PC-3 (cell line): ENCODE measurements at regions of chr3 and their contacts with region 1.

Region 1: DNA sequence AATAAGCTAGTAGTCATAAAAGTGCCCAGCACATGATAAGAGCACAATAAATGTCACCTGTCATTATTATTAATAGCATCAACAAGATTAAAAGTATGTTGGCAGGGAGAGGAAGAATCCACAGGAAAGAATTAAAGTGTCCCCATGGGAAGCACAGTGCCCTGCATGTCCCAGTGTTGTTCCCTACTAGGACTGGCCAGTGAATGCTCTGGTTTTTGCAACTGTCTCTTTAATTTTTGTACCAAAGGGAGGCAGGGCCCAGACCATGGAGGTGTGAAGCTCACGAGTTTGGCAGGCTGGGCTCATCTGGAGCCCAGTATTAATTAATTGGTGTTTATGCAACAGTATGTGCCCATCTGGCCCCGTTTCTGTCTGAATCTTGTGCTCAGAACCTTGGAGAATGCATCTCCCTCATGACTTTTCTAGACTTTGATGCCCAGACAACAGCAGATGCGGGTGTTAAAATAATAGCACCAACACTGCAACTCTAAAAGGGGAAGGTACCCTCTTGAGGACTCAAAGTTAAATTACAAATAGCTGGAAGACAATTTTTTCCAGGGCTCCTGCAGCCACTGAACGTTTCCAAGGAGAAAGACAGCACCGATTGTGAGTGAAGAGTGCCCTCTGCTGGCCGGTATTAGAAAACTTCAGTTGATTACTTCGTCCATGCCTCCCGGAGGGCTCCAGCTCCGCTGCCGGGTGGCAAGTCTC is 71.9 kb upstream of the SPATA12 start:
- DNase-seq: peak; percentile 87
- ATAC-seq: peak; percentile 53
- H3K4me3 ChIP-seq: no peak overlapping the region
- H3K27ac ChIP-seq: no peak overlapping the region
- H3K4me1 ChIP-seq: peaks cover 19% of the 10 kb centered on the region
- H3K27me3 ChIP-seq: no peaks in the 10 kb centered on the region
- CTCF ChIP-seq: peak; percentile 94

Region 2: GRCh38 chr3:56556908-56557830 is 431.4 kb before region 1 on chr3 and contains the start of gene CCDC66:
- CTCF ChIA-PET with region 1: no interaction called
- POLR2A ChIA-PET with region 1: interaction called, 18 read pairs
- intact Hi-C with region 1: no loop called
- DNase-seq: peak; percentile 89
- ATAC-seq: peak; percentile 99
- H3K4me3 ChIP-seq: peak within 1 kb of the TSS; percentile 75
- H3K27ac ChIP-seq: peak within 1 kb of the TSS; percentile 27
- H3K4me1 ChIP-seq: peaks cover 14% of the 10 kb centered on the region
- H3K27me3 ChIP-seq: peaks cover 31% of the 10 kb centered on the region
- CTCF ChIP-seq: peak; percentile 86
- total RNA-seq, gene CCDC66: 17.3 and 22.0 TPM in 2 replicates

Region 3: DNA sequence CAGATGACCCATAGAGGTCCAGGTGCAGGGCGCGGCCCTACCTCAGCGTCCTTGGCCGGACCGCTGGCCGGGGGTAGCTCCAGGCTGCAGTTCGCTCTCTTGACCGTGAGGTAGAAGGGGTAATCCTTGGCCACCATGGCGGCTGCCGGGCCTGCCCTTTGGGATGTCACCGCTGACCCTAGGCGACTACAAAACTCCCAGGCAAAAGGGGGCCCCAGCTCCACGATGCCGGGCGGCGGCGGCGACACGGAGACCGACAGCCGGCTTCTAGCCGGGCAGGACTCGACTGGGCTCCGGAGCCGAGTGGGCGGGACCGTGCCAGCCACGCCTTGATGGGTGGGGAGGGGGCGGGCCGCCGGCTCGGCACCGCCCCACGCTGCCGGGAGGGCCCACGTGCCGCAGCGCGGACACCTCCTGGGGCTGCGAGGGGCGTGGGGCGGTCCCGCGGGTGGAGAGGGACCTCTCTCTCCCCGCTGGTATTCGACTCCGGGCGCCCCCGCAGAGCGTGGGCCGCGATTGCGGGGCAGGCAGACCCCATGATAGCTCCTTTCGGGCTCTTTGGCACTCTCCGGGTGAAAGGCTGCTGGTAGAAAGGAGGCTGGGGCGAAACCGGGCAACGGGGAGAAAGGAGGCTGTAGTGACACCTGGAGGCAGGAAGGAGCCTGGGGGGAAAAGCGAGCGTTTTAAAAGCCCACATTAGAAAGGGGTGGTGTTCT is 186.8 kb before region 1 on chr3 and contains the start of gene ARHGEF3:
- CTCF ChIA-PET with region 1: interaction called, 26 read pairs
- POLR2A ChIA-PET with region 1: no interaction called
- intact Hi-C with region 1: loop called (anchors 1 kb)
- DNase-seq: peak; percentile 88
- ATAC-seq: peak; percentile 91
- H3K4me3 ChIP-seq: peak within 1 kb of the TSS; percentile 73
- H3K27ac ChIP-seq: 0 out of 2 replicates have a peak within 1 kb of the TSS, but pooled peaks have one; percentile 31
- H3K4me1 ChIP-seq: peaks cover 21% of the 10 kb centered on the region
- H3K27me3 ChIP-seq: no peaks in the 10 kb centered on the region
- CTCF ChIP-seq: peak; percentile 71
- total RNA-seq, gene ARHGEF3: 8.7 and 12.6 TPM in 2 replicates

Region 4: DNA sequence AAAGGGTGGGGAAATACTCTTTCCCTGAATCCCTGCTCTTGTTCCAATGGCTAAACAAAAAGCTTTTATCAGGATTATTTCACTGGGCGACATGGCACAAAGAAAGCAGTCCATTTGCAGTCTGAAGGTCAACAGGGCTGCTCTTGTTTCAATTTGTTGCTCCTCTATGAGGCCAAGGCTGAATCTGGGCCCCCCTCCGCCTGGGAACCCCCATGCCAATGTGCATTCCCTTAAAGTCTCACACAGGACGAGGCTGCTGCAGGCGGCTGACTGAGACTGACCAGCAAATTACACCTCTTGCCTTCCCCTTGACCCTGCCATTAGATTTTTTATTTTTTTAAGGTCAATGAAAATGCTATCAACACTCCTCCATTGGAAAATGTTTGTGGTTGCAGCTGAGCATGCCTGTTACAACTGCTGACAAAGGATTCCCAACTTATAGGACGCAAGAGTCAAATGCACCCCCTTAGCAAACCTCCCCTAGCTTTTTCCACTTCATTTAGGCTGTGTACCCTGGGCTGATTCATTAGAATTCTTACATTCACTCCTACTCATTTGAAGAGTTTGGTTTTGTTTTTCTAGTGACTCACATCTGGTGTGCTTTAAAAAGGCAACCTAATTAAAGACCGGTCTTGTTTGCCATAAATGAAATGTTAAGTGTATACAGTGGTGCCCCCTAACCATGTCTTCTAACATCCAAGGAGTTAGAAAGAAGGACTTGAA is 126.1 kb before region 1 on chr3:
- CTCF ChIA-PET with region 1: interaction called, 3 read pairs
- POLR2A ChIA-PET with region 1: no interaction called
- intact Hi-C with region 1: loop called (anchors 2 kb)
- DNase-seq: peak; percentile 85
- ATAC-seq: peak; percentile 91
- H3K4me3 ChIP-seq: no peak overlapping the region
- H3K27ac ChIP-seq: peak overlapping the region; percentile 51
- H3K4me1 ChIP-seq: peaks cover 12% of the 10 kb centered on the region
- H3K27me3 ChIP-seq: no peaks in the 10 kb centered on the region
- CTCF ChIP-seq: no peak

Region 5: GRCh38 chr3:57078344-57078634 is 89.7 kb after region 1 on chr3:
- CTCF ChIA-PET with region 1: interaction called, 11 read pairs
- POLR2A ChIA-PET with region 1: no interaction called
- intact Hi-C with region 1: no loop called
- DNase-seq: peak; percentile 47
- ATAC-seq: peak; percentile 43
- H3K4me3 ChIP-seq: peak overlapping the region; percentile 99
- H3K27ac ChIP-seq: no peak overlapping the region
- H3K4me1 ChIP-seq: peaks cover 6% of the 10 kb centered on the region
- H3K27me3 ChIP-seq: no peaks in the 10 kb centered on the region
- CTCF ChIP-seq: no peak

Region 6: GRCh38 chr3:57169872-57170623 is 181.4 kb after region 1 on chr3:
- CTCF ChIA-PET with region 1: no interaction called
- POLR2A ChIA-PET with region 1: no interaction called
- intact Hi-C with region 1: no loop called
- DNase-seq: peak; percentile 81
- ATAC-seq: peak; percentile 86
- H3K4me3 ChIP-seq: peak overlapping the region; percentile 67
- H3K27ac ChIP-seq: no peak overlapping the region
- H3K4me1 ChIP-seq: peaks cover 5% of the 10 kb centered on the region; the same call in 1 of the 2 replicates
- H3K27me3 ChIP-seq: no peaks in the 10 kb centered on the region
- CTCF ChIP-seq: peak; percentile 96